ENCODE measurements at regions of chr2 and their contacts with region 1.

Region 1: DNA sequence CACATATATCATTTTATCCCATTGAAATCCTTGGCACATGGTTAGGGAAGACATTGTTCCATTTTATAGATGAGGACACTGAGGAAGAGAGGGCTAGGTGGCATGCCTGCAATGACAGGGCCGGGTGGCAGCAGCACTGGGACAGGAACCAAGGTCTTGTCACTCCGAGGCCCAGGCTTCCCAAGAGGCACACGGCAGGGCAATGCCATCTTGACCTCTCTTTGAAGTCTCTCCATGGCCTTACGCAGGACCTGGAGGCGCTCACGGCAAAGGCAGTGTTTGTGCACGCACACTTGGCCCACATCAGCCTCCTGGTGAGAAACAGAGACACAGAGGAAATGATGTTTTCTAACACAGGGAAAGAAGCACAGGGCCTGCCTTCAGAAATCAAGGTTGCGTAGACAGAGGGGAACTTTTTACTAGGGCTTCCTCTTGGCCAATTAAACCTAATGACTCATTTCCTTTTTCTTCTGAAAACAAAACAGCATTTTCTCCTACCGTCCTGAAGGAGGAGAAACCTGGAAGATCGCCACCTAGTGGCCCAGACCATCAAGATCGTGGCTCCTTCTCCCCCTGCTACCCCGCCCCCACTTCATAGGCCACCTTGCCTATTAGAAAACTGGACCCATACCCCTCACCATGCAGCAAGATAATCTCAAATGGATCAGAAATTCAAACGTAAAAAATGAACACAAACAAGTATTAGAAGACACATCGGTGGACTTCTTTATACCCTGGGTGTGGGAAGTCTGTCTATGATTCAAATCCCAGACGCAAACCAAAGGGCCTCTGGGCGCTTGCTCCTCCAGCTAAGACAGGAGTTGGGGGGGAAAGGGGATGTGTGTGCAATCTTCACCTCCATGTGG is 74.6 kb upstream of the SP3 start:
- H3K4me3 Mint-ChIP-seq: peak overlapping the region; percentile 37
- H3K27ac Mint-ChIP-seq: peak overlapping the region; percentile 94
- H3K4me1 Mint-ChIP-seq: peaks cover 65% of the 10 kb centered on the region
- H3K27me3 Mint-ChIP-seq: no peaks in the 10 kb centered on the region

Region 2: GRCh38 chr2:173402405-173402974 is 637.3 kb before region 1 on chr2:
- intact Hi-C with region 1: loop called (anchors 10 kb)
- H3K4me3 Mint-ChIP-seq: peak overlapping the region; percentile 37
- H3K27ac Mint-ChIP-seq: no peak overlapping the region
- H3K4me1 Mint-ChIP-seq: peaks cover 7% of the 10 kb centered on the region
- H3K27me3 Mint-ChIP-seq: peaks cover 70% of the 10 kb centered on the region

Region 3: DNA sequence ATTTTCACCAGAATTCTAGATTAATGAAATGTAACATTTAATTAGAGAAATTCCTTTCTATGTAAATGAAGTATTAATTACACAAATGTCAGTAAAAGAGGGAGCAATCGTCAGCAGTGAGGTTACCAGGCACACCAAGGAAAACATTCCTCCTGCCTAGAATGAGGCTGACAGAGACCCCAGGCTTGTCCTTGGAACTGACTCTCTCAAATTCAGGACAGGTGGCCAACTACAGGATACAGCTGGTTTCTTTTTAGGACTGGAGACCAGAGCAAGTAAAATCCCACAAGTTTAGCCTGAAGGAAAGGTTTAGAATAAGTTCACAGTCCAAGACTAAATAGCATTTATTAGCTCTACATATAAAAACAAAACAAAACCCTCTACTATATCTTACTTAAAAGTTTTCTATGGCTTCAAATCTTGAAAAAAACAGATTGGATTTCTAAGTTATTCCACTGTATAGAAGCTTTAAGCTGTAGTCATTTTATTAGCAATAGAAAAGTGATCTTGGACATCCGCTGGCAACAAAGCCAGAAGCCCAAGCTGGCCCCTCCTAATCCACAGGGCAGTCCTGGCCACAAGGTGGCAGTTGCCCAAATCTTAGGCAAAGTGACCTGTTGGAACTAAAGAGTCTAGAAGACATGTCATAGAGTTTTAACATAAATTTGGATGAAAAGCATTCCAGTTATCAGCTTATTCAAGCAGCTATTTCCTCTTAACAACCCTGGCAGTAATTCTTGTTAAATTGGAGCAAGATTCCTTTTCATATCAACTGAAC is 155.6 kb before region 1 on chr2:
- intact Hi-C with region 1: loop called (anchors 10 kb)
- H3K4me3 Mint-ChIP-seq: no peak overlapping the region
- H3K27ac Mint-ChIP-seq: no peak overlapping the region
- H3K4me1 Mint-ChIP-seq: peaks cover 16% of the 10 kb centered on the region
- H3K27me3 Mint-ChIP-seq: no peaks in the 10 kb centered on the region

Region 4: DNA sequence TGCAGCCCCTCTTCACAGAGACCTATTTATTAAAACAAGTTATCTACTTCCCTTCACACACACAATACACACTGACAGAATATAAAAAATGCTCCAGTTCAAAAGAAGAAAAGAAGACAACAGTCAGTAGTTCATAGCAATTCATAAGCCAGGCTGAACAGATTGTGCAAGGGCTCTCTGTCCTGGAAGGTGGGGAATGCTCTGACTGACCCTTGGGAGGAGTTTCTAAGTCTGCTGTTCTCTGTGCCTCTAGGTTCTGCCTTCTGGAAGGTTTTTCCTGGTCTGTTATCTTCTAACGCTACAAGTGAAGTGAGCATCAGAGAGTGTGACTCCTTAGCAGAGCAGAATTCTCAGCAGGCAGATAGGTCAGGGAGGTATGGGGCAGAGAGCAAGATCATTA is 110.3 kb before region 1 on chr2:
- intact Hi-C with region 1: no loop called
- H3K4me3 Mint-ChIP-seq: no peak overlapping the region
- H3K27ac Mint-ChIP-seq: no peak overlapping the region
- H3K4me1 Mint-ChIP-seq: peaks cover 42% of the 10 kb centered on the region
- H3K27me3 Mint-ChIP-seq: no peaks in the 10 kb centered on the region

Region 5: DNA sequence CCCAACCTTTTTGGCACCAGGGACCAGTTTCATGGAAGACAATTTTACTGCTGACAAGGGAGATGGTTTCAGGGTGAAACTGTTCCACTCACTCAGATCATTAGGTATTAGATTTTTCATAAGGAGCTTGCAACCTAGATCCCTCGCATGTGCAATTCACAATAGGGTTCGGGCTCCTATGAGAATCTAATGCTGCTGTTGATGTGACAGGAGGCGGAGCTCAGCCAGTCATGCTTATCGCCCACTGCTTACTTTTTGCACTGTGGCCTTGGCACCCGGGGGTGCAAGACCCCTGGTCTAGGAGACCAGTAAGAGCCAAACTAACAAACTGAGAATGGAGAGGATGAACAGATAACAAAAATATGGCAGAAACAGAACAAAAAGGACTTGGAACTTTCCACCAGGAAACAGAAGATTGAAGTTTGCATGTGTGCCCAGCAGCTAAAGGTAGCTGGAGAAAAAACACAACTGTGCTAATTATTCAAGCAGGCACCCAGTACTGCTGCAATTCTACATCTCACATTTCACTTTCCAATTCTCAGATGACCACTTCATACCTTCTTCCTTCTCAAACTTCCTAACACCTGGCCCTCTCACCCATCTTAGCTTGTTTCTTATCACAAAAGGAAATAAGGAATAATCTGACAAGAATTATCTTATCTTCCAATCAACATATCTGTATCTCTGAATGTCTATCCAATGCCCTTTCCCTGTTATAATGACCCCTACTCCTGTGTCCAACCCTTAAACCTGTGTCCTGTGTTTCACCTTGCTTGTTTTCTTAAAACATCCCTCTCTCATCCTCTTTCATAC is 99.4 kb before region 1 on chr2:
- intact Hi-C with region 1: loop called (anchors 5 kb)
- H3K4me3 Mint-ChIP-seq: no peak overlapping the region
- H3K27ac Mint-ChIP-seq: peak overlapping the region; percentile 77
- H3K4me1 Mint-ChIP-seq: peaks cover 52% of the 10 kb centered on the region
- H3K27me3 Mint-ChIP-seq: no peaks in the 10 kb centered on the region

Region 6: DNA sequence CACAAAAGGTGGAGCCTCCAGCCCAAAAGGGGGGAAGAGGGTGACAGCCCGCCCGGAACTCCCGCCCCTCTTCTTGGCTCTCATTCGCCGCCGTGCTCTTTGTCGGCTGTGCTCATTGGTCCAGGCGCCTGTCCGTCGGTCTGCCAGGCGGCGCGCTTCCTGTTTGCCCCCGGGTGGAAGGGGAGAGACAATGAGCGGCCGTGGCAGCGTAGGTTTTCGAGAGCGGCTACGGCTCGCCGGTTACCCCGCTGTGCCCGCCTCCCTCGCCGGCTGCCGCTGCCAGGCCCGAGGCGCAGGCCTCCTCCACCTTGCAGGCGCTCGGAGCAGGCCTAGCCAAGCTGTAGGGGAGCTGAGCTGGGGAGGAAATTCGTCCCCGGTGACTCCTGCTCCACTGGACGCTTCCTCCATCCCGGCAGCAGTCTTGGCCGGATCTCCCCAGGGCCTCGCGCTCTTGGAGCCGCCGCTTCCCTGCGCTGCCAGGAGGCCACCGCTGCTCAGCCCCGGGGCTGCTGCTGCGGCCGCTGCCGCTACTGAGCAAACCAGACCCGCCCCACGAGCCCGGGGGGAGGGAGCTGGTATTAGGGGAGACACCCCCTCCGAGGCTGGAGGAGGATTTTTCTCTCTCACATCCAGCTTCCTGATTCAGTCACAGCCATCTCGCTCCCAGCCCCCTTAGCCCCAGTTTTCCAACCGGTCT is 74.3 kb before region 1 on chr2 and contains the start of gene SP3:
- intact Hi-C with region 1: loop called (anchors 2 kb)
- H3K4me3 Mint-ChIP-seq: peak within 1 kb of the TSS; percentile 96
- H3K27ac Mint-ChIP-seq: peak within 1 kb of the TSS; percentile 100
- H3K4me1 Mint-ChIP-seq: peaks cover 44% of the 10 kb centered on the region
- H3K27me3 Mint-ChIP-seq: no peaks in the 10 kb centered on the region

Region 7: DNA sequence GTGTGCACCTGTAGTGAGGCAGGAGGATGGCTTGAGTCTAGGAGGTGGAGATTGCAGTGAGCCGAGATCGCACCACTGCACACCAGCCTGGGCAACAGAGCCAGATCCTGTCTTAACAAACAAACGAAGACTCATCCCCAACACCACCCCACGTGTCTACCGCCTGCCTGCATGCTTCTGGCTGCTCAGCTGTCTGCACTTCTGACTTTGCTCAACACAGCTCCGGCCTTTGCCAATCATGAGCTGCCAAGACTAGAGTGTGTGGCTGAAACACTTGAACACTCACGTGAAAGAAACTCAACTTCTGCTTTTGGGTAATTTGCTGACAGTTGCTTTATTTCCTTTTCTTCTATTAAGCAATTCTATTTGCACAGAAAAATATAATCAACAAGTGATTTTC is 42.5 kb before region 1 on chr2:
- intact Hi-C with region 1: loop called (anchors 5 kb)
- H3K4me3 Mint-ChIP-seq: no peak overlapping the region
- H3K27ac Mint-ChIP-seq: peak overlapping the region; percentile 98
- H3K4me1 Mint-ChIP-seq: peaks cover 50% of the 10 kb centered on the region
- H3K27me3 Mint-ChIP-seq: no peaks in the 10 kb centered on the region

Region 8: GRCh38 chr2:174023591-174024523 is 15.9 kb before region 1 on chr2:
- intact Hi-C with region 1: loop called (anchors 1 kb)
- H3K4me3 Mint-ChIP-seq: peak overlapping the region; percentile 44
- H3K27ac Mint-ChIP-seq: peak overlapping the region; percentile 95
- H3K4me1 Mint-ChIP-seq: peaks cover 82% of the 10 kb centered on the region
- H3K27me3 Mint-ChIP-seq: no peaks in the 10 kb centered on the region

Region 9: DNA sequence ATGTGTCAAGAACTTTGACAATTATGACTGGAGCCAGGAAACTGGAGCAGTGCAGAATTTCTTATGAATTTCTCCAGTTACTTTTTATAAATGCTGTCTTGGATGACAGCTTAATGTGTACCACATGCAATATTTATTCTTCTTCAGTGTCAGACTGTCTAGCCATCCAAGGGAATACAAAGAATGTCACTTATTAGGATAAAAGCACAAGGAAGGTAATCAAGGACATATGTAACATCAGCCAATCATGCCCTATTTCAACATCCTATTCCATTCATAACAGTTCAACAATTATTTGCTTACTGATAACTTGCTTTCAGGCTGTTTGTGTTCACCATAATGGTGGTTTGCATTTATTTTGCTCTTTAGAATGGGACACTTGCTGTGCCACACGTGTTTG is 68.8 kb after region 1 on chr2:
- intact Hi-C with region 1: no loop called
- H3K4me3 Mint-ChIP-seq: no peak overlapping the region
- H3K27ac Mint-ChIP-seq: no peak overlapping the region
- H3K4me1 Mint-ChIP-seq: peaks cover 10% of the 10 kb centered on the region
- H3K27me3 Mint-ChIP-seq: no peaks in the 10 kb centered on the region

Measured in dendritic cell treated with granulocyte-macrophage colony-stimulating factor and Interleukin-4, amounts not matched to agents 40 ng/mL and 50 ng/mL, for 4 days (primary cell).